Activated CD8-positive, alpha-beta T cell treated with anti-CD3 and anti-CD28 coated beads, Interleukin-2, amount 10 ng/mL, durations not matched to agents 7 days and 5 days (primary cell): ENCODE measurements at regions of chr16 and their contacts with region 1.

Region 1: GRCh38 chr16:28491970-28492474 is at the start of gene CLN3:
- DNase-seq: peak; percentile 95
- ATAC-seq: peak; percentile 77
- H3K4me3 Mint-ChIP-seq: peak within 1 kb of the TSS; percentile 93
- H3K27ac Mint-ChIP-seq: peak within 1 kb of the TSS; percentile 99
- H3K4me1 Mint-ChIP-seq: peaks cover 63% of the 10 kb centered on the region
- H3K27me3 Mint-ChIP-seq: no peaks in the 10 kb centered on the region
- total RNA-seq, gene CLN3: 52.2 to 53.7 TPM

Region 2: GRCh38 chr16:28326944-28327610 is 164.9 kb before region 1 on chr16:
- CTCF ChIA-PET with region 1: no interaction called
- POLR2A ChIA-PET with region 1: no interaction called
- DNase-seq: peak; percentile 83
- ATAC-seq: peak; percentile 94
- H3K4me3 Mint-ChIP-seq: no peak overlapping the region
- H3K27ac Mint-ChIP-seq: no peak overlapping the region
- H3K4me1 Mint-ChIP-seq: peaks cover 6% of the 10 kb centered on the region
- H3K27me3 Mint-ChIP-seq: no peaks in the 10 kb centered on the region

Region 3: GRCh38 chr16:28503611-28504271 is 11.7 kb after region 1 on chr16:
- CTCF ChIA-PET with region 1: interaction called, 9 read pairs
- POLR2A ChIA-PET with region 1: interaction called, 13 read pairs
- DNase-seq: no peak
- ATAC-seq: no peak
- H3K4me3 Mint-ChIP-seq: no peak overlapping the region
- H3K27ac Mint-ChIP-seq: peak overlapping the region; percentile 17
- H3K4me1 Mint-ChIP-seq: peaks cover 25% of the 10 kb centered on the region
- H3K27me3 Mint-ChIP-seq: peaks cover 6% of the 10 kb centered on the region

Region 4: DNA sequence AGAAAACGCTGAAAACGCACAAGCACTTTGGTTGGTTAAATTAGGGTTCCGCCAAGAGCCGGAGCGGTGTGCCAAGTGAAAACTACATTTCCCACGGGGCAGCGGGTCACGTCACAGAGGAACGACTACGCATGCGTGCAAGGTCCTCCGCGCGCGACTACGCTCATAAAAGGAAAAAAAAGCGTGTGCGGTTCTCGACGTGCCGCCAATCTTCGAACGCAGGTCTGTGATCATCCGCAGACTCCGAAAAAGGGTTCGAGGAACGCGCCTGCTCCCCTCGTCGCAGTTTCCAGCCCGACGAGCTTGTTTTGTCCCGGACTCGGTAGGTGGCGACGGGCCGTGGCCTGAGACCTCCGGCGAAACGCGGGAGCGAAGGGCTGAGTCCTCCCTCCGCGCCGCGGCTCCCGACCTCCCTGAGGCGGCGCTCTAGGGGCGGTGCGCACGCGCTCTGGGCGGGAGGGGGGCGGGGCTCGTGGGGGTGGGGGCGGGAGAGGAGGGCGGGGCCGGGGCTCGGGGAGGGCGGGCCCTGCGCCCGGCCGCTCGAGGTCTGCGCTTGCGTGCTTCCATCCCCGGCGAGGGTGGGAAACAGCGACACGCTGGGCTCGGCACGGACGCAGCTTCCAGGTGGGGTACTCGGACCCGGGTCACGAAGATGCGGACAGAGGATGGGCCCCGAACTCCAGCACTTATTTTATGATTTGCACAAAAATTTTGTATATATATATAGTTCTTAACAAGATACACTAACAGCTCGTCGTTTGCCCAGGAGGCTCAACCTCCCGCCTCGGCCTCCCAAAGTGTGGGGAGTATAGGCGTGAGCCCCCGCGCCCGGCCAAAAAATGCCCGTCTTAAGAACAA is 62.0 kb after region 1 on chr16 and contains the start of gene SGF29:
- CTCF ChIA-PET with region 1: interaction called, 3 read pairs
- POLR2A ChIA-PET with region 1: interaction called, 10 read pairs
- DNase-seq: peak; percentile 97
- ATAC-seq: peak; percentile 91
- H3K4me3 Mint-ChIP-seq: peak within 1 kb of the TSS; percentile 90
- H3K27ac Mint-ChIP-seq: peak within 1 kb of the TSS; percentile 98
- H3K4me1 Mint-ChIP-seq: peaks cover 28% of the 10 kb centered on the region
- H3K27me3 Mint-ChIP-seq: peaks cover 3% of the 10 kb centered on the region
- total RNA-seq, gene SGF29: 42.2 to 49.1 TPM